Upper lobe of right lung (tissue), 1 donor: ENCODE measurements at regions of chr10 and their contacts with region 1.

Region 1: DNA sequence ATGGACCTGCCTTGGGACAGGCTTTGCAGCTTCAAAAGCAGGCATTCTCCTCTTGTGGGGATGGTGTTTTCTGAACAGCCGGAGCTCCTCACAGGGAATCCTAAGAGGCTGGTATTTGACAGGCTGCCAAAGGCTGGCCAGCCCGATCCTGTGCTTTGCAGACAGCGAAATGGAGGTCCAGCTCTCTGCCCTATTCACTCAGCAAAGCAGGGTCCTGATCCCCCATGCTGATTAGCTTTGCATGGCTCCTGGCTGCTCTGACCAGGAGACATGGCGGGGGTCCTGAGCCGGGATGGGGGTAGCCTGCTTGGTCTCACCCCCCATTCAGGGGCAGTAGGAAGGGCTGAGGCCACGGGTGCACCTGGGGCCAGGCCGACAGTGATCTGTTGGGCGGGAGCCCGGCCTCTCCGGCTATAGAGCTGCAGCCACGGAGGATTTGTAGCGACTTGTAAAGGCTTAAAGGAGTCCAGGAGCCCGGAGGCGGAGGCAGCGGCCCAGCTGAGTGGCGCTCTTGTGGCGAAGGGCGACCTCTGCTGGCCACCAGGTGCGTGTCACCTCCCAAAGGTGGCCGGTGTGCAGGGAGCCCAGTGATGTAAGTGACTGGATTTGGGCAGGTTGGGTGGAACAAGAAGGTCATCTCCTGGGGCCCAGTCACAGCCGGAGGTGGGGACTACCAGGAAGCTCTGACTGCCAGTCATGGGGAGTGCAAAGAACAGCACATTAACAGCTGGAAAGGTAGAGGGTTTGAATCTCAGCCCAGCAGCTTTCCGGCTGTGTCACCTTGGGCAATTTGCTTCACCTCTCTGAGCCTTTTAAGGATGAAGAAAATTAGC is 126.5 kb downstream of the ZMIZ1 start:
- DNase-seq: peak; percentile 93
- ATAC-seq: peak; percentile 93
- H3K4me3 ChIP-seq: no peak overlapping the region
- H3K27ac ChIP-seq: peak overlapping the region; percentile 71
- H3K4me1 ChIP-seq: peaks cover 32% of the 10 kb centered on the region
- H3K27me3 ChIP-seq: no peaks in the 10 kb centered on the region
- CTCF ChIP-seq: no peak

Region 2: DNA sequence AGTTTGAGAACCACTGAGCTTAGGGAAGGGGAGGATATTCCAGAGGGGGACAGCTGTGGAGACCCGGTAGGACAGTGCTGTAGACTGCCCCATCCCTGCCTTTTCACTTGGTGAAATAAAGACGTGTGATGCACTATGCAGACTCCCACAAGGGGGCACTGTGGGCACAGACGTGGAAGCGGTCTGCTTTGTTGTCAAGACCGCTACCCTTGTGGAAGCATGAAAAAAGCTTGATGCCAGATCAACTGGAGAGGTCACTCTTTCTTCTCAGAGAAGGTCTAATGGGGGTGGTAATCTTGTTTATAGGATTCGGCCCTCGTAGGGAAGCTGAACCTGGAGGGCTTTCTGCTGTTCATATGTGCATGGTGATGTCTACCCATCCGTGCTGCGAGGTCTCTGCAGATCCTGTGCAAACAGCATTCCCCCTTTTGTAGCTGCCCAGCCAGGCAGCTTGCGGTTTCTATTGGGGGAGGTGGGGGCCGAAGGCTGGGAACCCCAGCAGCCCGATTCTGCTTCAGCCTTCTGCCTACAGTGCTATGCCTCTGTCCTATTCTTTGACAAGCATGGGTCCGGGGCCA is 1147.9 kb before region 1 on chr10:
- intact Hi-C with region 1: loop called (anchors 10 kb)
- DNase-seq: peak; percentile 86
- ATAC-seq: peak; percentile 93
- H3K4me3 ChIP-seq: no peak overlapping the region
- H3K27ac ChIP-seq: no peak overlapping the region
- H3K4me1 ChIP-seq: peaks cover 4% of the 10 kb centered on the region
- H3K27me3 ChIP-seq: no peaks in the 10 kb centered on the region
- CTCF ChIP-seq: peak; percentile 91

Region 3: GRCh38 chr10:79069325-79070080 is 125.8 kb before region 1 on chr10:
- intact Hi-C with region 1: loop called (anchors 5 kb)
- DNase-seq: peak; percentile 86
- ATAC-seq: peak; percentile 2
- H3K4me3 ChIP-seq: peak overlapping the region; percentile 87
- H3K27ac ChIP-seq: peak overlapping the region; percentile 94
- H3K4me1 ChIP-seq: peaks cover 42% of the 10 kb centered on the region
- H3K27me3 ChIP-seq: no peaks in the 10 kb centered on the region
- CTCF ChIP-seq: no peak

Region 4: DNA sequence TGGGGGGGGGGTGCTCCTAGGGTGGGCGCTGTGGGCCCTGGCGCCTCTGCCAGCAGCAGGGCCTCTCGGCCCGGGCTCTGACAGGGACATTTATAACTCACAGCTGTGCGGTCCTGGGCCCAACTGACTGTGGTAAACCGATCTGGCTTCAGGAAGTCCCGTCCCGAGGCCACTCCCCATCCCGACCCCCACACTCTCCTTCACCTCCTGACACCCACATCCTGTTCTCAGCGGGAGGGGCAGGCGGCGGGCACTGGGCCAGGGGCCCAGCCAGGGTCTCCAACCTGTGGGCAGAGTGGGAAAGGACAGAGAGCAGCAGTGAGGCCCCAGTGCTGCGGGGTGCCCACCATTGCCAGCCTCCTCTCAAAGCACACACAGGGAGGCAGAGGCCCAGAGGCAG is 57.5 kb before region 1 on chr10:
- intact Hi-C with region 1: no loop called
- DNase-seq: no peak
- ATAC-seq: peak; percentile 44
- H3K4me3 ChIP-seq: no peak overlapping the region
- H3K27ac ChIP-seq: peak overlapping the region; percentile 64
- H3K4me1 ChIP-seq: peaks cover 70% of the 10 kb centered on the region
- H3K27me3 ChIP-seq: no peaks in the 10 kb centered on the region
- CTCF ChIP-seq: no peak